Uterus (tissue), 4 donors: ENCODE measurements at regions of chr10 and their contacts with region 1.

Region 1: DNA sequence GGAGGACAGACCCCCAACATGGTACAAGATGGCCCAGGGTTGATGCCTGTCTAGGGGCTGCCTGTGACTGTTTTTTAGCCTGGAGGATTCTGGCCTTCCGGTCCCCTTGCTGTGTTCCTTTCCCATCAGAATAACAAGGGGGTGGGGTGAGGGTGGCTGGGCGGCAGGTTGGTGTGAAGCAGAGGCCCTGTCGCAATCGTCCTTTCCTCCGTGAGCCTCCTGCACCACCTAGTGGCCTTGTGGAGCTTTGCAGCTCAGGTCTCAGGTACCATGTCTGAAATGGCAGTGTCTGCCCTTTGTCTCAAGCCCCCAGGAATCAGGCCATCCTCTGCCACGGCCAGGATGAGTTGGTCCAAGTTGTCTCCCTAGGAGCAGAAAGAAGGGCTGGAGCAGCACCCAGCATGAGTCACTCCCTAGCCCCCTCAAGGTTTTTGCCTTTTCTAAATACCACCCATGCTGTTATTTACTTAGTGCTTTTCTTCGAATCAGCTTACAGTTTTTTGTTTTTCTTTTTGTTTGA is 24.2 kb downstream of the TACR2 start:
- DNase-seq: peak; percentile 85 to 89
- H3K4me3 ChIP-seq: no peak overlapping the region
- H3K27ac ChIP-seq: peak overlapping the region in 1 of 2 donors; percentile 15
- H3K4me1 ChIP-seq: no peaks in the 10 kb centered on the region
- H3K27me3 ChIP-seq: no peaks in the 10 kb centered on the region
- CTCF ChIP-seq: peak; percentile 97 to 98 (median 98)
- POLR2A ChIP-seq: no peak

Region 2: GRCh38 chr10:69237528-69238159 is 154.9 kb before region 1 on chr10:
- intact Hi-C with region 1: loop called (anchors 5 kb)
- DNase-seq: peak; percentile 88 to 91
- H3K4me3 ChIP-seq: no peak overlapping the region
- H3K27ac ChIP-seq: no peak overlapping the region
- H3K4me1 ChIP-seq: peaks cover 0 to 3% of the 10 kb centered on the region in 2 donors
- H3K27me3 ChIP-seq: no peaks in the 10 kb centered on the region
- CTCF ChIP-seq: peak; percentile 85 to 98 (median 94)
- POLR2A ChIP-seq: no peak

Region 3: GRCh38 chr10:69451209-69451783 is 58.8 kb after region 1 on chr10 and contains the start of gene TSPAN15:
- intact Hi-C with region 1: no loop called
- DNase-seq: peak; percentile 83 to 86
- H3K4me3 ChIP-seq: peak within 1 kb of the TSS; percentile 55 to 57
- H3K27ac ChIP-seq: peak within 1 kb of the TSS; percentile 61 to 74
- H3K4me1 ChIP-seq: no peaks in the 10 kb centered on the region
- H3K27me3 ChIP-seq: no peaks in the 10 kb centered on the region
- CTCF ChIP-seq: peak in 1 of 4 experiments; percentile 5
- POLR2A ChIP-seq: peak; percentile 68 to 69
- total RNA-seq, gene TSPAN15: 17.2 to 58.1 (median 24.4) TPM

Region 4: GRCh38 chr10:69861251-69862240 is 469.0 kb after region 1 on chr10:
- intact Hi-C with region 1: no loop called
- DNase-seq: no peak
- H3K4me3 ChIP-seq: no peak overlapping the region
- H3K27ac ChIP-seq: no peak overlapping the region
- H3K4me1 ChIP-seq: no peaks in the 10 kb centered on the region
- H3K27me3 ChIP-seq: no peaks in the 10 kb centered on the region
- CTCF ChIP-seq: peak in 1 of 4 experiments; percentile 4
- POLR2A ChIP-seq: no peak